ENCODE measurements at regions of chr14 and their contacts with region 1.

Region 1: GRCh38 chr14:105861985-105862465 is 335.6 kb downstream of the TMEM121 start:
- DNase-seq: peak; percentile 57
- ATAC-seq: peak; percentile 30
- H3K4me3 Mint-ChIP-seq: peak overlapping the region; percentile 98
- H3K27ac Mint-ChIP-seq: peak overlapping the region; percentile 99
- H3K4me1 Mint-ChIP-seq: peaks cover 1% of the 10 kb centered on the region
- H3K27me3 Mint-ChIP-seq: no peaks in the 10 kb centered on the region
- CTCF ChIP-seq: no peak

Region 2: GRCh38 chr14:105647764-105648608 is 214.0 kb before region 1 on chr14:
- CTCF ChIA-PET with region 1: no interaction called
- POLR2A ChIA-PET with region 1: interaction called, 14 read pairs
- intact Hi-C with region 1: no loop called
- DNase-seq: peak; percentile 41
- ATAC-seq: peak; percentile 85
- H3K4me3 Mint-ChIP-seq: peak overlapping the region; percentile 98
- H3K27ac Mint-ChIP-seq: peak overlapping the region; percentile 97
- H3K4me1 Mint-ChIP-seq: peaks cover 50% of the 10 kb centered on the region
- H3K27me3 Mint-ChIP-seq: no peaks in the 10 kb centered on the region
- CTCF ChIP-seq: no peak

Region 3: DNA sequence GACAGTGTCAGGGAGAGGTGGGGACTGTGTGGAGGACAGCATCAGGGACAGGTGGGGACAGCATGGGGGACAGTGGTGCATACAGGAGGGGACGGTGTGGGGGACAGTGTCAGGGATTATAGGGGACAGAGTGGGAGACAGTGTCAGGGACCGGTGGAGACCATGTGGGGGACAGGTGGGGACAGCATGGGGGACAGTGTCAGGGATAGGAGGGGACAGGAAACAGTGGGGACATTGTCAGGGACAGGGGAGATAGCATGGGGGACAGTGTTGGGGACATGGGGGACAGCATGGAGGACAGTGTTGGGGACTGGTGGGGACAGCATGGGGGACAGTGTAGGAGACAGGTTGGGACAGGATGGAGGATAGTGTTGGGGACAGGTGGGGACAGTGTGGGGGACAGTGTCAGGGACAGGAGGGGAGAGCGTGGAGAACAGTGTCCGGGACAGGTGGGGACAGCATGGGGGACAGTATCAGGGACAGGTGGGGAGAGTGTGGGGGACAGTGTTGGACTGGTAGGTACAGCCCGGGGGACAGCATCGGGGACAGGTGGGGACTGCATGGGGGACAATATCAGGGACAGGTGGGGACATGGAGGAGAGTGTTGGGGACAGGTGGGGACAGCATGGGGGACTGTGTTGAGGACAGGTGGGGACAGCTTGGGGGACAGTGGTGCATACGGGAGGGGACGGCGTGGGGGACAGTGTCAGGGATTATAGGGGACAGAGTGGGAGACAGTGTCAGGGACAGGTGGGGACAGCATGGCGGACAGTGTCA is 123.6 kb before region 1 on chr14:
- CTCF ChIA-PET with region 1: no interaction called
- POLR2A ChIA-PET with region 1: interaction called, 9 read pairs
- intact Hi-C with region 1: loop called (anchors 2 kb)
- DNase-seq: no peak
- ATAC-seq: peak; percentile 18
- H3K4me3 Mint-ChIP-seq: no peak overlapping the region
- H3K27ac Mint-ChIP-seq: peak overlapping the region; percentile 19
- H3K4me1 Mint-ChIP-seq: peaks cover 20% of the 10 kb centered on the region
- H3K27me3 Mint-ChIP-seq: no peaks in the 10 kb centered on the region
- CTCF ChIP-seq: no peak

Region 4: DNA sequence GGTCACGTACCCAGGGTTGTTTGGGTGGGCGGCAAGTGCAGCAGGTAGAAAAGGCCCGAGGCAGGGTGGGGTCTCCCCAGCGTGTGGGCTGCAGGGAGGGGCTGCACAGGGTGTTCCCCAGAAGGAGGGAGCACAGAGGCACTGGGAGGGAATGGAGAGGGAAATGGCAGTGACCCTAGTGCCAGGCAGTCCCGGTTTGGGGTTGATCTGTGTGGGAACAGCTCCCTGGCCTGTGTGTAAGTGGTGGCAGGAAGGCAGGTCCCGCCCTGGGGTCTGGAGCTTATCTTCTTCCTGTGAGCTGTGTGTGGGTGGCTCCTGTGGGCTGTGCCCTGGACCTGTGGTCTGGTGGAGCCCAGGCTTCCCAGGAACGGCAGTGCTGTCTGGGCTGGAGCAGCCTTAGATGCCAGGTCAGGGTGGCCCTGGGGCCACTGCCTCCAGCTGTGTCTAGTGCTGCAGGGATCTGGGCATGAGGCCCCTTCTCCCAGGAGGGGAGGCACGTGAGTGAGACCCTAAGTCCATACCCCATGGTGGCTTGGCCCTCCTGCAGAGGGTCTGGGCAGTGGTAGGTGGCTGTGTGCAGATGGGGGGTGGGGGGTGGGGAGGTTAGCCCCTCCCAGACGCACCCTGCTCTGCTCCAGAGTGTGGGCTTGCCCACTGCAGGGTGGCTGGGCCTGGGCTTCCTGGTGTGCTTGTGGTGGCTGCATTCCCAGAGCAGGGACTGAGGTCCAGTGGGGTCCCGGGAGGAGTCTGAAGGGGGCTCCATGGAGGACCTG is 27.9 kb after region 1 on chr14:
- CTCF ChIA-PET with region 1: no interaction called
- POLR2A ChIA-PET with region 1: interaction called, 93 read pairs
- intact Hi-C with region 1: loop called (anchors 2 kb)
- DNase-seq: no peak
- ATAC-seq: no peak
- H3K4me3 Mint-ChIP-seq: peak overlapping the region; percentile 67
- H3K27ac Mint-ChIP-seq: peak overlapping the region; percentile 66
- H3K4me1 Mint-ChIP-seq: peaks cover 2% of the 10 kb centered on the region
- H3K27me3 Mint-ChIP-seq: no peaks in the 10 kb centered on the region
- CTCF ChIP-seq: no peak

Region 5: GRCh38 chr14:105944632-105945610 is 82.9 kb after region 1 on chr14:
- CTCF ChIA-PET with region 1: no interaction called
- POLR2A ChIA-PET with region 1: interaction called, 18 read pairs
- intact Hi-C with region 1: no loop called
- DNase-seq: peak; percentile 53
- ATAC-seq: peak; percentile 70
- H3K4me3 Mint-ChIP-seq: peak overlapping the region; percentile 24
- H3K27ac Mint-ChIP-seq: peak overlapping the region; percentile 46
- H3K4me1 Mint-ChIP-seq: peaks cover 42% of the 10 kb centered on the region
- H3K27me3 Mint-ChIP-seq: no peaks in the 10 kb centered on the region
- CTCF ChIP-seq: no peak

Region 6: GRCh38 chr14:106200541-106201315 is 338.7 kb after region 1 on chr14:
- CTCF ChIA-PET with region 1: no interaction called
- POLR2A ChIA-PET with region 1: no interaction called
- intact Hi-C with region 1: no loop called
- DNase-seq: no peak
- ATAC-seq: no peak
- H3K4me3 Mint-ChIP-seq: no peak overlapping the region
- H3K27ac Mint-ChIP-seq: no peak overlapping the region
- H3K4me1 Mint-ChIP-seq: no peaks in the 10 kb centered on the region
- H3K27me3 Mint-ChIP-seq: peaks cover 8% of the 10 kb centered on the region
- CTCF ChIP-seq: no peak

Region 7: DNA sequence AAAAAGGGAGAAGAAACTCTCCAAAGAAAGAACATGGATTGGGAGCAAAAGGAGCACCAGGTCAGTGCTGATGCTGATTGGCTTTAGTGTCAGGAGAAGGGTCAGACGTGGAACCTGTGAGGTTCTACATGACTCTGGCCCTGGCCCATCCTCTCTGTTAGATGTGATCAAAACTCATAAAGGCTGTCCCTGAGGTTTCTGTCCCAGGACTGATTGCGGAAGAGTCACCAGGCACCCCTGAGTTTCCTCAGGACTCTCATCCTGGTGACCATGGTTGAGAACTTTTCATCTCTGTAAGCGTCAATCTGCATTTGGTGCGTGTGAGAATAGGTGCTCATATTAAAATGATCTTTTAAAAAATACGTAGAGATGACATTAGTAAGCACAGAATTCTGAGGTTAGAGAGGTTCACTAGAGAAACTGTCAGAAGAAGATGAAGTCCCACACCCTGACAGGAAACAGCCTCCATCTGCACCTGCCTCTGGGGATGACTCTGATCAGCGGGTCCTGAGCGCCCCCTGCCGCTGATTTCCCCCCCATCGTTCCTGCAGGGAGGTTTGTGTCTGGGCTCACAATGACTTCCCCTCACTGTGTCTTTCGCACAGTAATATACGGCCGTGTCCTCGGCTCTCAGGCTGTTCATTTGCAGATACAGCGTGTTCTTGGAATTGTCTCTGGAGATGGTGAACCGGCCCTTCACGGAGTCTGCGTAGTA is 406.1 kb after region 1 on chr14:
- CTCF ChIA-PET with region 1: interaction called, 3 read pairs
- POLR2A ChIA-PET with region 1: interaction called, 18 read pairs
- intact Hi-C with region 1: no loop called
- DNase-seq: peak; percentile 58
- ATAC-seq: peak; percentile 61
- H3K4me3 Mint-ChIP-seq: peak overlapping the region; percentile 84
- H3K27ac Mint-ChIP-seq: peak overlapping the region; percentile 85
- H3K4me1 Mint-ChIP-seq: peaks cover 6% of the 10 kb centered on the region
- H3K27me3 Mint-ChIP-seq: peaks cover 20% of the 10 kb centered on the region
- CTCF ChIP-seq: no peak